Activated CD8-positive, alpha-beta T cell treated with anti-CD3 and anti-CD28 coated beads, Interleukin-2, amount 10 ng/mL, durations not matched to agents 7 days and 5 days (primary cell): ENCODE measurements at regions of chr19 and their contacts with region 1.

Region 1: DNA sequence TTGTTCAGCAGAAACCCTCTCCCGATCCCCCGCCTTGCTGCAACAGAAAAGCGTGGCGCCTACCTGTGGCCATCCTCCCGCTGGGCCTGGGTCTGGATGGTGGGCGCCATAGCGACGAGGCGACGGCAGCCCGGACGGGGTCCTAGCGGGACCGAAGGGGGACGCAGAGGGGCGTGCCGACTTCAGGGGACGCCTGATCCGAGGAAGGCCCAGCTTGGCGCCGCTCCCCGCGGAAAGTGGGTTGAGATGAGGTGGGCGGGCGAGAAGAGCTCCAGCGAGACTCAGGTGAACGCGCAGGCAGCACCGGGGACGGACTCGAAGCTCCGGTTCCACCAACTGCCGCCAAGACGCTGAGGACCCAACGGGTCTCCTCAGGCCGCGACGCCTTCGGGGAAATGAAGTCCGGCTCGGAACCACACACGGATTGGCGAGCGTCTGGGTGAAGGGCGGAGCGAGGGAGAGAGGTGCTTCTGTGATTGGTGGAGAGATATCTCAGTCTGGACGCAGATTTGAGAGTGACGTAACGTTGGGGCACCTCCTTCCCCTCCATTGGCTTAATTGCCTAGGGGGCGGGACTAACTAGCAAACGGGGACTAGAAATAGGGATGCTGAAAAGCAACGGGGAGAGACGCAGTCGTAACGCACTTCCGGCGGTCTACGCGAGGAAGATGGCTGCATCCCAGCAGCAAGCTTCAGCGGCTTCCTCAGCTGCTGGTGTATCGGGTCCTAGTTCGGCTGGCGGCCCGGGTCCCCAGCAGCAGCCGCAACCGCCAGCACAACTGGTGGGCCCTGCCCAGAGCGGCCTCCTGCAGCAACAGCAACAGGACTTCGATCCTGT is at the starts of genes MED29 and PAF1:
- DNase-seq: peak; percentile 99
- ATAC-seq: peak; percentile 95
- H3K4me3 Mint-ChIP-seq: peak within 1 kb of the TSS; percentile 95
- H3K27ac Mint-ChIP-seq: peak within 1 kb of the TSS; percentile 100
- H3K4me1 Mint-ChIP-seq: peaks cover 45% of the 10 kb centered on the region
- H3K27me3 Mint-ChIP-seq: no peaks in the 10 kb centered on the region
- total RNA-seq, gene MED29: 32.6 to 39.3 TPM
- total RNA-seq, gene PAF1: 48.2 to 48.9 TPM

Region 2: GRCh38 chr19:39329948-39330347 is 61.0 kb before region 1 on chr19:
- CTCF ChIA-PET with region 1: no interaction called
- POLR2A ChIA-PET with region 1: no interaction called
- DNase-seq: no peak
- ATAC-seq: no peak
- H3K4me3 Mint-ChIP-seq: no peak overlapping the region
- H3K27ac Mint-ChIP-seq: no peak overlapping the region
- H3K4me1 Mint-ChIP-seq: peaks cover 52% of the 10 kb centered on the region
- H3K27me3 Mint-ChIP-seq: no peaks in the 10 kb centered on the region

Region 3: DNA sequence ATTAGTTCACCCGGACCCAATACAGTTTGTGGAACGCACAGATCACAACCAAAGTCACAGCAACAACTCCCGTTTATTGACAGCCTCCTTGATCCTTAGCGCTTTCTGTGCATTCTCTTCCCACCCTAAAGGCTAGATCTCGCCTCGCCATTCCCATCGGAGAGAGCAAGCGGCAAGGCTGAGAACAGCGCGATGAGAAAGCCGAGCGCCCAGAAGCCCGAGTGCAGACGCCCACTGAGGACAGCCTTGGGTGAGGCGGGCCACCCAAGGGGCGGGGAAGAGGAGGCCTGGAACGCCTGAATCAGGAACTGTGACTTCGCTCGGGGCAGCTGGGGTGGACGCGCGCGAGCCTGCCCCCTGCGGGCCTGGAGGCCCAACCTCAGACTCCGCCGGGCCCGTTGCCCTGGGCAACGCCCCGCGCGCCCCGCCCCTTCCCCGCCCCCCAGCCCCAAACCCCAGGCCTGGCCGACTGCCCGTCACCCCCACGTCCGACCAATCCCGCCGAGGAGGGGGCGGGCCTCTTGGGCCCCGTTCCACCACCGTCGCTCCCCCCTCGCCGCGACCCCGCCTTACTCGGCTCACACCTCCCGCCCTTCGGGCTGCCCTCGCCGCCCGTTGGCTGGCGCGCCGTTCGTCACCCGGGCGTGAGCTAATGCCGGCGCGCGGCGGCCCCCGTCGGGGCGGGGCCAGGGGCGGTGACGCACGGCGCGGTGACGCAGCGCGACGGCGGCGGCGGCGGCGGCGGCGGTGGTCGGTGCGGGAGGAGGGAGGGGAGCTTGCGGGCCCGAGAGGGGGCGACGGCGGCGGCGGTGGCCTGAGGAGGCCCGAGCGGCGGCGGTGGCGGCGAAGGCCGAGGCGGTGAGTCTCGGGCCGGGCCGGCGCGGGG is 49.0 kb before region 1 on chr19 and contains the start of gene SAMD4B:
- CTCF ChIA-PET with region 1: interaction called, 9 read pairs
- POLR2A ChIA-PET with region 1: interaction called, 12 read pairs
- DNase-seq: peak; percentile 99
- ATAC-seq: peak; percentile 92
- H3K4me3 Mint-ChIP-seq: peak within 1 kb of the TSS; percentile 90
- H3K27ac Mint-ChIP-seq: peak within 1 kb of the TSS; percentile 91
- H3K4me1 Mint-ChIP-seq: peaks cover 66% of the 10 kb centered on the region
- H3K27me3 Mint-ChIP-seq: no peaks in the 10 kb centered on the region
- total RNA-seq, gene SAMD4B: 43.7 to 44.5 TPM

Region 4: DNA sequence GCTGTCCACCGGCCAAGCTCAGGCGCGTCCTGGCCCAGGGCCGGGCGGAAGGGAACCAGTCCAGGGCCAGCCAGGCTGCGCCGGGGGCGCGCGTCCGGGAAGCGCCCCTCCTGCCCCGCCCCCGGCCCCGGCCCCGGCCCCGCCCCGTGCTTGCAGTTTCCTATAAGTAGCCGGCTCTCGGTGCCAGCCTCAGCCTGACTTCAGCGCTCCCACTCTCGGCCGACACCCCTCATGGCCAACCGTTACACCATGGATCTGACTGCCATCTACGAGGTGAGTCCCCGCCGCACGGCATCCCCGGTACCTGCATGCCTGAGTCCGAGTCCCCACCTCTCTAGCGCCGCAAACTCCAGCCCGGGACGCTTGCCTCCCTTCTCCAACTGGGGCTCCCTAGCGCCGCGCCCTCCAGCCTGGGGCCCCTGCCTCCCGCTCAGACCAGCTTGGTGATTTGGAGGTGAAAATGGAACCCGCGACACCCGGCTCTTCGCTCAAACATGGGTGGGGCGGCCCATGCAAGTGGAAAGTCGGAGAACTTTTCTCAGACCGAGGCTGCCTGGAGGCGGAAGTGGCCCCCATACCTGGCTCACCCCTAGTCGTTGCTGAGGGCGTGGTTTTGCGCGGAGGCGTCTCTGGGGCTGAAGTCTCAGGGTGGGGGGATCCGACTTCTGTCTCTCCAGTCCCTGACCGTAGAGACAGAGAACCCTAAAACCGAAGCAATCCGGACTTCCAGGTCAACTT is 15.9 kb after region 1 on chr19 and contains the start of gene ZFP36:
- CTCF ChIA-PET with region 1: interaction called, 145 read pairs
- POLR2A ChIA-PET with region 1: interaction called, 100 read pairs
- DNase-seq: peak; percentile 90
- ATAC-seq: peak; percentile 41
- H3K4me3 Mint-ChIP-seq: peak within 1 kb of the TSS; percentile 97
- H3K27ac Mint-ChIP-seq: peak within 1 kb of the TSS; percentile 99
- H3K4me1 Mint-ChIP-seq: peaks cover 60% of the 10 kb centered on the region
- H3K27me3 Mint-ChIP-seq: no peaks in the 10 kb centered on the region
- total RNA-seq, gene ZFP36: 72.4 to 91.4 TPM